Activated naive CD4-positive, alpha-beta T cell treated with anti-CD3 and anti-CD28 coated beads for 36 hours (primary cell): ENCODE measurements at regions of chr19 and their contacts with region 1.

Region 1: GRCh38 chr19:3132971-3133792 is 2.7 kb upstream of the GNA15 start:
- DNase-seq: peak; percentile 96
- H3K4me3 Mint-ChIP-seq: peak overlapping the region; percentile 10
- H3K27ac Mint-ChIP-seq: peak overlapping the region; percentile 88
- H3K4me1 Mint-ChIP-seq: peaks cover 30% of the 10 kb centered on the region
- H3K27me3 Mint-ChIP-seq: peaks cover 7% of the 10 kb centered on the region

Region 2: DNA sequence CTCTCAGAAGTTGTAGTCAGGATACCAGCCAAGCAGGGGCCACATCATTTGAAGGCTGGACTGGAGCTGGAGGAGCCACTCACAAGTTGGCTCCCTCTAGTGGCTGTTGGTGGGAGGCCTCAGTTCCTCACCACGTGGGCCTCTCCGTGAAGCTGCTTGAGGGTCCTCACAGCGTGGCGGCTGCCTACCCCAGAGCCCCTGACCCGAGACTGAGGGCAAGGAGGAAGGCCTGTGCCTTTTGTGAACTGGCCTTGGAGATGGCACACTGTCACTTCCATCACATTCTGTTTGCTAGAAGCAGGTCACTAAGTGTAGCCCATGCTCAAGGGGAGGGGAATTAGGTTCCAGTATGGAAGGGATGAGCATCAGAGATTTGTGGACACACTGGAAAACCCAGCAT is 24.4 kb before region 1 on chr19:
- CTCF ChIA-PET with region 1: interaction called, 14 read pairs
- intact Hi-C with region 1: no loop called
- DNase-seq: peak; percentile 77
- H3K4me3 Mint-ChIP-seq: no peak overlapping the region
- H3K27ac Mint-ChIP-seq: no peak overlapping the region
- H3K4me1 Mint-ChIP-seq: peaks cover 9% of the 10 kb centered on the region
- H3K27me3 Mint-ChIP-seq: no peaks in the 10 kb centered on the region

Region 3: GRCh38 chr19:3154957-3155736 is 22.0 kb after region 1 on chr19:
- CTCF ChIA-PET with region 1: interaction called, 26 read pairs
- intact Hi-C with region 1: loop called (anchors 1 kb)
- DNase-seq: peak; percentile 97
- H3K4me3 Mint-ChIP-seq: no peak overlapping the region
- H3K27ac Mint-ChIP-seq: no peak overlapping the region
- H3K4me1 Mint-ChIP-seq: no peaks in the 10 kb centered on the region
- H3K27me3 Mint-ChIP-seq: no peaks in the 10 kb centered on the region

Region 4: GRCh38 chr19:3176603-3177501 is 43.7 kb after region 1 on chr19:
- CTCF ChIA-PET with region 1: no interaction called
- intact Hi-C with region 1: loop called (anchors 2 kb)
- DNase-seq: peak; percentile 84
- H3K4me3 Mint-ChIP-seq: peak overlapping the region; percentile 68
- H3K27ac Mint-ChIP-seq: peak overlapping the region; percentile 84
- H3K4me1 Mint-ChIP-seq: peaks cover 20% of the 10 kb centered on the region
- H3K27me3 Mint-ChIP-seq: no peaks in the 10 kb centered on the region

Region 5: DNA sequence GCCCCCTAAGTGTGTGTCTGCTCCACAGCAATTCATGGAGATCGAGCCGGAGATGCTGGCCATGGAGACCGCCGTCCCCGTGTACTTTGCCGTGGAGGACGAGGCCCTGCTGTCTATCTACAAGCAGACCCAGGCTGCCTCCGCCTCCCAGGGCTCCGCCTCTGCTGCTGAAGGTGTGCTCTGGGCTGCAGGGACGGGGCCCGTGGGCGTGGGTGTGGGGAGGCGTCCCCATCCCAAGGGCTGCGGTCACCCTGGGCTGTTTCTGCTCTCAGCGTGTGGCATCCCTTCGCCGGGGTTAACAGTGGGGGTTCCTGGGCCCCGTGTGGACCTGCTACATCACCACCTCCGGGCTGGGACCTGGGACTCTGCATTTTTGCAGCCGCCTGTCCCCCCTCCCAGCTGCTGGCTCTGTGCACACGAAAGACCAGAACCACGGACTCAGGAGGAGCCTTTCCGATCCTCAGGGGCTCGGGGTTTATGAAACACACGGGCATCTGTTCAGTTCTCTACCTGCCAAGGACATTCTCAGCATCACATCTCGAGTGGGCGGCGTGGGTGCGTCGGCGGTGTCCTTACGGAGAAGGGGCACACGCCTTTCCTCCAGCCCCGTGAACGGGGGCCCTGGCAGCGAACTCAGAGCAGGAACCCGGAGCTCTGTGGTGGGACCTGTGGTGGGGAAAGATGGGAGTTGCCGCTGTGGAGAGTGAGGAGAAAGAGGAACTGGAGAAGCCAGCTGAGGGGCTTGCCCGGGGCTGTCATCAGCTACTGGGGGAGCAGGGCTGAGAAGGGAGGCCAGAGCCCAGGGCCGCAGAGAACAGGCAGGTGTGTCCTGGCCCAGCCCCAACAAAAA is 60.3 kb after region 1 on chr19:
- CTCF ChIA-PET with region 1: no interaction called
- intact Hi-C with region 1: no loop called
- DNase-seq: no peak
- H3K4me3 Mint-ChIP-seq: no peak overlapping the region
- H3K27ac Mint-ChIP-seq: no peak overlapping the region
- H3K4me1 Mint-ChIP-seq: peaks cover 13% of the 10 kb centered on the region
- H3K27me3 Mint-ChIP-seq: no peaks in the 10 kb centered on the region